CD4-positive, alpha-beta memory T cell (primary cell): ENCODE measurements at regions of chr19 and their contacts with region 1.

Region 1: GRCh38 chr19:44782729-44783128 is 5.0 kb downstream of the CBLC start:
- DNase-seq: no peak
- H3K4me3 ChIP-seq: no peak overlapping the region
- H3K4me3 Mint-ChIP-seq: no peak overlapping the region
- H3K27ac ChIP-seq: no peak overlapping the region
- H3K27ac Mint-ChIP-seq: no peak overlapping the region
- H3K4me1 ChIP-seq: peaks cover 3% of the 10 kb centered on the region
- H3K4me1 Mint-ChIP-seq: peaks cover 4 to 7% (median 6%) of the 10 kb centered on the region in 4 donors
- H3K27me3 ChIP-seq: no peaks in the 10 kb centered on the region
- H3K27me3 Mint-ChIP-seq: peaks cover 0 to 7% of the 10 kb centered on the region in 2 donors

Region 2: DNA sequence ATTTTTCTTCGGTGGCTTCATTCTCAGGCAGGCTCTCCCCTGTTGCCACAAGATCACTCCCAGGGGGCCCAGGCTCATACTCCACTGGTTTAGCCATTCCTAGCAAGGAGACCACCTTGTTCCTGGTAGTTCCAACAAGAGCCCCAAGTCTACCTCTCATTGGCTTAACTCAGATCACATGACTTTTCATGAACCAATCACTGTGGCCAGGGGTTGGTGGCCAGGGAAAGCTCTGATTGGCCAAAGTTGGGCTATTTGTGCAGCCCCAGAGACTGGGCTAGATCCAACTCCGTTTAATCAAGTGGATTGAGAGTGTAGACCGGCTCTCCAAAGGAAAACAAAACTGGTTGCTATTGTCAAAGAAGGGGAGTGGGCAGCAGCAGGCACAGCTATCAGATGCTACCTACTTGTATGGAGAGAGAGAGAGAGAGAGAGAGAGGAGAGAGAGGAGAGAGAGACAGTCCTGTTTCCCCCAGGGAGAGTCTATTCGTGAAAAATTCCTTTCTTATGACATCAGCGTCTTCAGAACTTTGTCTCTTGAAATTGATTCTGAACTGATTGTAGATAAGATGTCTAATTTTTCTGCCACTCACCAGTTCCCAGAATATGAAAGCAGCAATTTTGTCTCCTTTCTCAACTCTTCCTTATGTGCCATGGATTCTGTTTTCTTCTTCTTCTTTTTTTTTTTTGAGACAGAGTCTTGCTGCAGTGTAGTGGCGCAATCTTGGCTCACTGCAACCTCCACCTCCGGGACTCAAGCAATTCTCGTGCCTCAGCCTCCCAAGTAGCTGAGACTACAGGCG is 105.5 kb before region 1 on chr19:
- CTCF ChIA-PET with region 1: no interaction called
- POLR2A ChIA-PET with region 1: no interaction called
- intact Hi-C with region 1: no loop called
- DNase-seq: no peak
- H3K4me3 ChIP-seq: no peak overlapping the region
- H3K4me3 Mint-ChIP-seq: no peak overlapping the region
- H3K27ac ChIP-seq: no peak overlapping the region
- H3K27ac Mint-ChIP-seq: peak overlapping the region in 1 of 7 donors; percentile 48
- H3K4me1 ChIP-seq: no peaks in the 10 kb centered on the region
- H3K4me1 Mint-ChIP-seq: no peaks in the 10 kb centered on the region
- H3K27me3 ChIP-seq: no peaks in the 10 kb centered on the region
- H3K27me3 Mint-ChIP-seq: peaks cover 0 to 14% of the 10 kb centered on the region in 2 donors

Region 3: GRCh38 chr19:44753932-44754749 is 28.6 kb before region 1 on chr19:
- CTCF ChIA-PET with region 1: no interaction called
- POLR2A ChIA-PET with region 1: no interaction called
- intact Hi-C with region 1: no loop called
- DNase-seq: peak; percentile 31 to 66 (median 47)
- H3K4me3 ChIP-seq: peak overlapping the region; percentile 74 to 90
- H3K4me3 Mint-ChIP-seq: peak overlapping the region; percentile 89 to 96 (median 93)
- H3K27ac ChIP-seq: peak overlapping the region; percentile 95
- H3K27ac Mint-ChIP-seq: peak overlapping the region; percentile 97 to 100 (median 98)
- H3K4me1 ChIP-seq: peaks cover 68% of the 10 kb centered on the region
- H3K4me1 Mint-ChIP-seq: peaks cover 36 to 75% (median 55%) of the 10 kb centered on the region in 4 donors
- H3K27me3 ChIP-seq: no peaks in the 10 kb centered on the region
- H3K27me3 Mint-ChIP-seq: no peaks in the 10 kb centered on the region

Region 4: DNA sequence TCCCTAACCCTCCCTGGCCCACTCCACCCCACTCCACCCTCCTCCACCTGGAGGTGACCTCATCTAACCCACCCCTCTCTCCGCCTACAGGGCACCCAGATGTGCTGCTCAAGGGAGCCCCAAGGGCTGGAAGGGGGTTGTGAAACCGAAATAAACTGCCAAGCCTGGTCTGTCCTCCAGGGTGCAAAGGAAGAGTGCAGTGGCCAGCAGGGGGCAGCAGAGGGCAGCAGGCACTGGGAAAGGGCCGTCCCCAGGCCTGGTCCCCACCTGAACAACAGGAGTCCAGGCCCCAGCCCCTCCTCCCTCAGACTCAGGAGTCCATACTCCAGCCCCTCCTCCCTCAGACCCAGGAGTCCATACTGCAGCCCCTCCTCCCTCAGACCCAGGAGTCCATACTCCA is 17.7 kb after region 1 on chr19:
- CTCF ChIA-PET with region 1: interaction called, 27 read pairs
- POLR2A ChIA-PET with region 1: no interaction called
- intact Hi-C with region 1: no loop called
- DNase-seq: peak; percentile 70 to 78 (median 73)
- H3K4me3 ChIP-seq: no peak overlapping the region
- H3K4me3 Mint-ChIP-seq: no peak overlapping the region
- H3K27ac ChIP-seq: no peak overlapping the region
- H3K27ac Mint-ChIP-seq: peak overlapping the region in 1 of 7 donors; percentile 56
- H3K4me1 ChIP-seq: peaks cover 15% of the 10 kb centered on the region
- H3K4me1 Mint-ChIP-seq: peaks cover 10 to 20% (median 14%) of the 10 kb centered on the region in 4 donors
- H3K27me3 ChIP-seq: no peaks in the 10 kb centered on the region
- H3K27me3 Mint-ChIP-seq: peaks cover 0 to 2% of the 10 kb centered on the region in 2 donors

Region 5: DNA sequence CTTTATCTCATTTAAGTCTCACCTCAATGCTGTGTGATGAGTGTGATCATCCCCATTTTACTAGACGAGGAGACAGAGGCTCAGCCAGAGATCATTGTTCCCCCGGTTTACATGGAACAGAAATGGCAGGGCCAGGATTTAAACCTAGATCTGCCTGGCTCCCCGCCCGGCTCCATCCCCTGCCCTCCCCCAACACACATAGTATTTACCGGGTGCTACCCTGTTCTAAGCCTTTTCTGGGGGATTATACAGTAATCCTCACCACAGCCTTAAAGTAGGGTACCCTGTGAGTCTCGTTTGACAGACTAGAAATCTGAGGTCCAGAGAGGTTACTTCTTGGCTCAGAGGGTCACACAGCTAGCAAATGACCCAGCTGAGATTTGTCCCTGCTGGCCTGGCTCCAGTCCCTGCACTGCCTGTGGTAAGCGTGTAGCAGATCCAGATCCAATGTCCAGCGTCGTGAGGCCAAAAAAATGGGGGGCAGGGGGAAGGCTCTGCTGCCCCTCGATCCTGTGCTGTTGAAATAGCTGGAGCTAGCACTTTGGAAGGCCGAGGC is 554.0 kb after region 1 on chr19:
- CTCF ChIA-PET with region 1: no interaction called
- POLR2A ChIA-PET with region 1: no interaction called
- intact Hi-C with region 1: loop called (anchors 5 kb)
- DNase-seq: no peak
- H3K4me3 ChIP-seq: no peak overlapping the region
- H3K4me3 Mint-ChIP-seq: no peak overlapping the region
- H3K27ac ChIP-seq: no peak overlapping the region
- H3K27ac Mint-ChIP-seq: no peak overlapping the region
- H3K4me1 ChIP-seq: no peaks in the 10 kb centered on the region
- H3K4me1 Mint-ChIP-seq: peaks cover 2 to 6% (median 4%) of the 10 kb centered on the region in 4 donors
- H3K27me3 ChIP-seq: peaks cover 5% of the 10 kb centered on the region
- H3K27me3 Mint-ChIP-seq: peaks cover 18 to 22% of the 10 kb centered on the region in 2 donors